Activated CD4-positive, alpha-beta memory T cell treated with anti-CD3 and anti-CD28 coated beads, Interleukin-2, amount 10 ng/mL, durations not matched to agents 7 days and 5 days (primary cell): ENCODE measurements at regions of chr10 and their contacts with region 1.

Region 1: DNA sequence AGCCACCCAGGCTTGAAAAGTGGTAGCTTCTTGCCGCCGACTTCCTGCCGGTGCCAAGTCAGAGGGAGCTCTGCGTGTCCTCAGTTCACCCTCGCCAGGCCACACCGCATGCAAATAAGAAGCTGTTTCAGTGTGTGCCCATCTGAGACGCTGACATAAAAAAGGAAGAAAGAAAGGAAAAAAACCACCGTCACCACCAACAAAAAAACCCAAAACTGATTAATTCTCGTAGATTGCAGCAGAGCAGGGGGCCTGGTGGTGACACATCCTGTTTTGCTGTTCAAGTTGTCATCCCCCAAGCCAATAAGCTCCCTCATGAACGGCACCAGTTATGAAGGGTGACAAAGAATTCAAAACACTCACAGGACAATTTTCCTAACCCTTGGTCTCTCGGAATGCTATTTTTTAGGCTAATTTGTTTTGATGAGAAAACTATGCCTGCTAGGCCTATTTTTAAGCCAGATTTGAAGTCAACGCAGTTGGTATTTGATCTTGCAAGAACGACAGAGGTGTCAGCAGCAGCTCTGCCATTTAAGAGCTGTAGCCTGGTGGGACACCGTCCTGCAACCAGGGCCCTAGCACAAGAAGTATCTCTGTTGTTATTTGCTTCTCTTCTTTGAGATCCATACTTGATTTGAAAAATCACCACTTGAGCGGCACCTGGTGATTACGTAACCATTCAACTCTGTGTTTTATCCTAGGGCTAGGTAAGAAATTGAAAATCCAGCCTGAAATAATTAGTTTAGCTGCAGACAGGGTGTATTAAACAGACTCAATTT is 145.6 kb downstream of the PFKFB3 start:
- DNase-seq: peak; percentile 87
- H3K4me3 Mint-ChIP-seq: peak overlapping the region; percentile 64
- H3K27ac Mint-ChIP-seq: peak overlapping the region; percentile 92
- H3K4me1 Mint-ChIP-seq: peaks cover 47% of the 10 kb centered on the region
- H3K27me3 Mint-ChIP-seq: peaks cover 3% of the 10 kb centered on the region

Region 2: DNA sequence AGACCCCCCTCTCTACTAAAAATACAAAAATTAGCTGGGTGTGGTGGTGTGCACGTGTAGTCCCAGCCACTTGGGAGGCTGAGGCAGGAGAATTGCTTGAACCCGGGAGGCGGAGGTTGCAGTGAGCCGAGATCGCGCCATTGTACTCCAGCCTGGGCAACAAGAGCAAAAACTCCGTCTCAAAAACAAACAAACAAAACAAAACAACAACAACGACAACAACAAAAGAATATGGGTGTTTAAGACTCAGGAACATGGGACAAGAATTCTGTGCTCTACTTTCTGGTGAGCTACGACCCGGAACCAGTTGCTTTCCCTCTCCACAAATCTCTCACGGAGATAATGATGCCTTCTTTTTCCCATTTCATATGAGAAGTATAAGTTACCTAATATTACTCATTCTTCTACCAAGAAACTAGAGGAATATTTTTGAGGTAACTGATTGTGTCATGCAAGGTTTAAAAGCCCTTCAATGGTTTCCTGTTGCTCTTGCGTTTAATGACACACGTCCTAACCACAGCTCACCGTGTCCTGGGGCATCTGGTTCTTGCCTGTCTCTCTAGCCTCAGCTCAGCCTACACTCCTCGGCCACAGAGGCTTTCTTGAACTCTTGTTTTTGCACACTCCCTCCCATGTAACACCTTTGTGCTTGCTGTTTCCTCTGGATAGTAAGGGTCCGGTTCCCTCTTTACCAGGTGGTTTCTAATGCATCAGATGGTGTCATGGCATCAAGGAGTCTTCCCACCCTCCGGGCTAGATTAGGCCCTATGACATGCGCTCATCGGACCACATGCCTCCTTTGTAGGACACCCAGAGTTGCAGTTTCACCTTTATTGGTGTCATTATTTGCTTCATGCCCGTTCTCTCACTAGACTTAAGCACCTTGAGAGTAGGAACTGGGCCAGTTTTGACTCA is 78.1 kb before region 1 on chr10:
- CTCF ChIA-PET with region 1: interaction called, 3 read pairs
- POLR2A ChIA-PET with region 1: interaction called, 21 read pairs
- DNase-seq: peak; percentile 87
- H3K4me3 Mint-ChIP-seq: peak overlapping the region; percentile 38
- H3K27ac Mint-ChIP-seq: peak overlapping the region; percentile 98
- H3K4me1 Mint-ChIP-seq: peaks cover 68% of the 10 kb centered on the region
- H3K27me3 Mint-ChIP-seq: peaks cover 7% of the 10 kb centered on the region

Region 3: GRCh38 chr10:6275022-6275997 is 73.0 kb before region 1 on chr10:
- CTCF ChIA-PET with region 1: no interaction called
- POLR2A ChIA-PET with region 1: interaction called, 21 read pairs
- DNase-seq: peak; percentile 92
- H3K4me3 Mint-ChIP-seq: peak overlapping the region; percentile 60
- H3K27ac Mint-ChIP-seq: peak overlapping the region; percentile 91
- H3K4me1 Mint-ChIP-seq: peaks cover 72% of the 10 kb centered on the region
- H3K27me3 Mint-ChIP-seq: no peaks in the 10 kb centered on the region

Region 4: GRCh38 chr10:6364893-6365292 is 16.6 kb after region 1 on chr10:
- CTCF ChIA-PET with region 1: interaction called, 12 read pairs
- POLR2A ChIA-PET with region 1: interaction called, 4 read pairs
- DNase-seq: no peak
- H3K4me3 Mint-ChIP-seq: no peak overlapping the region
- H3K27ac Mint-ChIP-seq: no peak overlapping the region
- H3K4me1 Mint-ChIP-seq: no peaks in the 10 kb centered on the region
- H3K27me3 Mint-ChIP-seq: peaks cover 2% of the 10 kb centered on the region